Endothelial cell of umbilical vein (primary cell): ENCODE measurements at regions of chr16 and their contacts with region 1.

Region 1: GRCh38 chr16:12661656-12662172 is 142.0 kb downstream of the CPPED1 start:
- DNase-seq: peak; percentile 65
- H3K4me3 ChIP-seq: no peak overlapping the region
- H3K27ac ChIP-seq: no peak overlapping the region
- H3K4me1 ChIP-seq: no peaks in the 10 kb centered on the region
- H3K27me3 ChIP-seq: no peaks in the 10 kb centered on the region
- CTCF ChIP-seq: no peak
- POLR2A ChIP-seq: no peak

Region 2: DNA sequence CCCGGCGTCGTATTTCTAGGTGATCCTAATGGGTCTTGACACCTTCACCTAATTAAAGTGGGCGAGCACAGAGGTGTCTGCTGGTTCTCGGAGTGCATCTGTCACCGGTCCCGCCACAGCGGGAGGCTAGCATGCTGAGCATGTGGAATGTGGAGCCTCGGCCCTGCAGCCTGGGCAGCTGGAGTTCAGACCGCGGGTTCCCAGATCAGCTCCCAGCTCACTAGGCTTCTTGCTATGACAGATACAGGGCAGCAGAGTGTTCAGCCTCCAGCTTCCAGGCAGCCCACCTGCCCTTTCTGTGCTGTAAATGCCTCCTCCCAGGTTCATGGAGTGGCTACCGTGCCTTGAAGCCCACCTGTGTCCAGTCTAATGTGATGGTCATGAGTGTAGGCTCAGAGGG is 24.7 kb before region 1 on chr16:
- CTCF ChIA-PET with region 1: no interaction called
- POLR2A ChIA-PET with region 1: no interaction called
- dilution Hi-C with region 1: no loop called
- intact Hi-C with region 1: loop called (anchors 2 kb)
- DNase-seq: no peak
- H3K4me3 ChIP-seq: no peak overlapping the region
- H3K27ac ChIP-seq: no peak overlapping the region
- H3K4me1 ChIP-seq: no peaks in the 10 kb centered on the region
- H3K27me3 ChIP-seq: no peaks in the 10 kb centered on the region
- CTCF ChIP-seq: no peak
- POLR2A ChIP-seq: no peak